ENCODE measurements at regions of chr7 and their contacts with region 1.

Region 1: DNA sequence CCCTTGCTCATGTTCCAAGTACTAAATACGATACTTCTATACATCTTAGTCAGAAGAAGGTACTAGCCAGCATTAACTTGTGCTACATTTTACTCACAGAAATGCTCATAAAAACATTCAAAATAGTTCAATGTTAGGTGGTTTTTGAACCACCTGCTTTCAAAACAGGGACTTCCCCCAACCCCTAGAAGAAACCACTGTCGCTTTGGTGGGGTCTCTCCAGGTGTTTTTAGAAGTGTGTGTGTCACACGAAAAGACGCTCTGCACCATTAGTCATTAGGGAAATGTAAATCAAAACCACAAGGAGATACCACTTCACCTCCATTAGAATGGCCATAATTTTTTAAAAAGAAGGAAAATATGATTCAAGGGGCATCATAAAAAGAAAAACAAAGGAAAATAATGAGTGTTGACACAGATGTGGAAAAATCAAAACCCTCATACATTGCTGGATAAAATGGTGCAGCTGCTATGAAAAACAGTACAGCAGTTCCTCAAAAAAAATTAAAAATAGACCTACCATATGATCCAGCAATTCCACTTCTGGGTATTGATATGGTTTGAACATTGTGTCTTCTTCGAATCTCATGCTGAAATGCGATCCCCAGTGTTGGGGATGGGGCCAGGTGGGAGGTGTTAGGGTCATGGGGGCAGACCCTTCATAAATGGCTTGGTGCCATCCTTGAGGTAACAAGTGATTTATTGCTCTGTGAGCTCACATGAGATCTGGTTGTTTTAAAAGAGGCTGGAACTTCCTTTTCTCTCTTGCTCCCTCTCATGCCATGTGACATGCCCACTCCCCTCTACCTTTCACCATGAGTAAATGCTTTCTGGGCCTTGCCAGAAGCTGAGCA is 74.2 kb downstream of the MALSU1 start:
- DNase-seq: no peak
- H3K4me3 Mint-ChIP-seq: peak overlapping the region; percentile 9
- H3K27ac Mint-ChIP-seq: peak overlapping the region; percentile 94
- H3K4me1 Mint-ChIP-seq: peaks cover 49% of the 10 kb centered on the region
- H3K27me3 Mint-ChIP-seq: peaks cover 6% of the 10 kb centered on the region

Region 2: GRCh38 chr7:23298885-23299769 is 74.3 kb before region 1 on chr7 and contains the start of gene MALSU1:
- intact Hi-C with region 1: loop called (anchors 1 kb)
- DNase-seq: peak; percentile 93
- H3K4me3 Mint-ChIP-seq: peak within 1 kb of the TSS; percentile 88
- H3K27ac Mint-ChIP-seq: peak within 1 kb of the TSS; percentile 88
- H3K4me1 Mint-ChIP-seq: peaks cover 38% of the 10 kb centered on the region
- H3K27me3 Mint-ChIP-seq: peaks cover 4% of the 10 kb centered on the region
- total RNA-seq, gene MALSU1: 92.3 and 92.8 TPM in 2 replicates

Region 3: DNA sequence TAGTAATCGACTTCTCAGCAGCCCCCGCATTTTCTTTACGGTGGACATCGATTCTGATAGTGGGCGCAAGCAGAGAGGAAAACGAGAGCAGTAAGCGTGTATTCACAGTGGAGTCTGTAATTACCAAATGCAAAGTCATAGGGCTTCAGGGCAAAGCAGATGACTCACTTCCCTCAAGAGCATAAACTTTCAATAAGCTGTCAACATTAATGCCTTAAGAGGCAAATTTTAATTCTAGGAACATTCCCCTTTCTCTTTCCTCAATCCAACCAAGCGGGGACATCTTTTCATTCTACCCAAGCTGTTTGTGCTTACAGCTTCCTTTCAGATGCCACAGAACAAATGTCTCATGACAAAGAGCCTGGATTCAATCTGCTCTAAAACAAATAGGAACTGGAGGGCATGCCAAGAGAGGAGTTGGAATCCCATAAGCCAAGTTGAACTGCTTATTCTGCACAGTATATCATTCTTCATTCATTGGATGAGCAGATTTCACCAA is 25.6 kb before region 1 on chr7:
- intact Hi-C with region 1: loop called (anchors 1 kb)
- DNase-seq: no peak
- H3K4me3 Mint-ChIP-seq: peak overlapping the region; percentile 48
- H3K27ac Mint-ChIP-seq: no peak overlapping the region
- H3K4me1 Mint-ChIP-seq: peaks cover 31% of the 10 kb centered on the region
- H3K27me3 Mint-ChIP-seq: peaks cover 18% of the 10 kb centered on the region

Region 4: DNA sequence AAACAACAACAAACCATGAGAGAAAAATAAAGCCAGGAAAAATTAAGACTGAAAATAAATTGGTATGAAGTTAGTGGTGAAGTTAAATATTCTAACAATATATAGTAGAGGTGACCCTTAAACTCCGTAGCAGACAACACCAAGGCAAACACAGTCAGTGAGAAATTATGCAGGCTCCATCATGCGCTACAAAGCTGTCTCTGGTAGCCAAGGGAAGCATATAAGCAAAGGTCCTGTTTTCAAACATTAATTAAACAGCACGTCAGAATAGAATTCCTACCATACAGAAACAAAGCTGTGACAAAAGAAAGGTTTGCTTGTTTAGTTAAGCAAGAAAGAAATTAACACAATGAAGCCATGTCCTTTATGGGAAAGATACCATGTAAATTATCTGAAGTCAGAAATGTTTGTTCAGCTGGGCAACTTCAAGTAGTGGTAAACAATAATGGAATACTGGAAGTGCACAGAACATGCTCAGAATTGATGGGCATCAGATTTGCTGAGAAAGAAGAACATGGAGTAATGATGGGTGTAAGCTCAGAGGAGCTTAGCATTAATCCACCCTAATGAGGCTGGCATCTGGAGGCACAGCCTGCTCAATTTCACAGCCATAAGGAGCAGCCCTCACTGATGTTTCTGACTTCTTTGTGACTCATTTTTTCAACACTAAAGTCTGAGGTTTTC is 21.3 kb after region 1 on chr7:
- intact Hi-C with region 1: loop called (anchors 1 kb)
- DNase-seq: no peak
- H3K4me3 Mint-ChIP-seq: no peak overlapping the region
- H3K27ac Mint-ChIP-seq: no peak overlapping the region
- H3K4me1 Mint-ChIP-seq: peaks cover 9% of the 10 kb centered on the region
- H3K27me3 Mint-ChIP-seq: peaks cover 5% of the 10 kb centered on the region

Region 5: GRCh38 chr7:23404546-23405239 is 31.3 kb after region 1 on chr7:
- intact Hi-C with region 1: loop called (anchors 1 kb)
- DNase-seq: no peak
- H3K4me3 Mint-ChIP-seq: peak overlapping the region; percentile 7
- H3K27ac Mint-ChIP-seq: peak overlapping the region; percentile 82
- H3K4me1 Mint-ChIP-seq: peaks cover 14% of the 10 kb centered on the region
- H3K27me3 Mint-ChIP-seq: no peaks in the 10 kb centered on the region

Region 6: DNA sequence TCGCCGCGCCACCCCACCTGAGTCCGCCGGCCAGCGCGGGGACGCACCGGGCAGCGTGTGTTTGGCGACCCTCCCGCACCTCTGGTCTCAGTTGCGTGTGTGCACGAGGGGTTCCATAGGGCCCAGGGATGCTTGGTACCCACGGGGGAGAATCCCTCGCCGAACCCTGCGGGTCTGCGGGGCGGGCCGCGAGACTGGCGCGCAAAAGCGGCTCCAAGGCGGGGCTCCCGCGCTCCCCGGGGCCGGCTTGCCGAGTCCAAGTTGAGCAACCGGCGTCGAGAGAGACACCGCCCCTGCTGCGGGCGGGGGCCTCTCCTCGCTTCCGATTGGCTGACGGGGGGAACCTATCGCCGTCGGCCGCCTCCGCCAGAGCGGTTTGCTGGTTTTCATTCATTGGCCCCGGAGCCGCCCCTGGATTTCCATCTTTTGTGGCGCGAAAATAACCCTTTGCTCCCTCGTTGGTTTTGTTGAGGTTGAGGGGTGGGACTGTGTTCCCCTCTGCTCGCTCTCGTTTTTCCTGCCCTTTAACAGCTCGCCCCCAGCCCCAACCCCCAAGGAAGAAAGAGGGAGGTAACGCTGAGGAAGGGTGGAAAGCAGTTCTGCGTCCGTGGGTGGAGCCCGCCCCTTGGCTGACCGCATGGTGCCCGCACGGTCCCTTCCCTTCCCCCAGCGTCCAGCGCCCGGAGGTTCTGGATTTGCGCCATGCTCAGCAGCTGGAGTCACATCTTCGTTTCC is 100.9 kb after region 1 on chr7:
- intact Hi-C with region 1: loop called (anchors 1 kb)
- DNase-seq: peak; percentile 89
- H3K4me3 Mint-ChIP-seq: peak overlapping the region; percentile 83
- H3K27ac Mint-ChIP-seq: peak overlapping the region; percentile 57
- H3K4me1 Mint-ChIP-seq: peaks cover 39% of the 10 kb centered on the region
- H3K27me3 Mint-ChIP-seq: peaks cover 63% of the 10 kb centered on the region

Region 7: GRCh38 chr7:23490357-23491135 is 117.2 kb after region 1 on chr7:
- intact Hi-C with region 1: no loop called
- DNase-seq: peak; percentile 38
- H3K4me3 Mint-ChIP-seq: peak overlapping the region; percentile 84
- H3K27ac Mint-ChIP-seq: peak overlapping the region; percentile 82
- H3K4me1 Mint-ChIP-seq: peaks cover 4% of the 10 kb centered on the region
- H3K27me3 Mint-ChIP-seq: no peaks in the 10 kb centered on the region

Region 8: GRCh38 chr7:23893942-23894891 is 520.8 kb after region 1 on chr7:
- intact Hi-C with region 1: loop called (anchors 10 kb)
- DNase-seq: peak; percentile 24
- H3K4me3 Mint-ChIP-seq: peak overlapping the region; percentile 41
- H3K27ac Mint-ChIP-seq: peak overlapping the region; percentile 65
- H3K4me1 Mint-ChIP-seq: peaks cover 35% of the 10 kb centered on the region
- H3K27me3 Mint-ChIP-seq: peaks cover 9% of the 10 kb centered on the region

Measured in activated T-helper 1 cell treated with anti-CD3 and anti-CD28 coated beads, Interleukin-12 subunit alpha, Interleukin-12 subunit beta, Interleukin-2, Interleukin-4 antibody, amounts not matched to agents 30 ng/mL and 10 ng/mL and 1 ng/mL, durations not matched to agents 14 hours and 24 hours and 36 hours (primary cell).